ENCODE measurements at regions of chr1 and their contacts with region 1.

Region 1: DNA sequence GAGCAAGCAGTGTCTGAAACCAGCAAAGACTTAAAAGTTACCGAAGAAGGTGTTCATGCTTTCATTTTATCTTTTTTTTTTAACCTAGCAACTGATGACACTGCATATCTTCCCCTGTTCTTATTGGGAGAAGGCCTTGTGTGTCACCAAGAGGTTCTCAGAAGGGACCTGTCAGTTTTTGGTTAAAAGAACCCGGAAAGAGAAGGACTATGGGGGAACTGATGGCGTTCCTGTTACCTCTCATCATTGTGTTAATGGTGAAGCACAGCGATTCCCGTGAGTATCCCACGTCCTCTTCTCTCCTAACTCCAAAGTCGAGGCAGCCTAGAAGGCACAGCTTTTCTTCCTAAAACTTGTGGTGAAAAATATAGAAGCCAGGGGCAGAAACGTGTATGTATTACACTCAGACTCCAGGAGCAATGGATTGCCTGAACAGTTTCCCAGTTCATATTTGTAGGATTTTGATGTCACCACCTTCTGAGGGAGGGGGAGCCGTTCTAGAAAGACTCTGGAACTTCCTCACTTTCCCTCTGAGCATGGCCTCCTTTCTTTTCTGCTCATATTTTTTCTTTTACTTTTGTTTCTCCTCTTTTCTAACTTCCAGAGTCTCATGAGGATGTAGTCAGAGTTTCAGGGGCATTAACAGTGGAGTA is at the start of gene MR1:
- DNase-seq: no peak
- ATAC-seq: peak; percentile 95
- total RNA-seq, gene MR1: 10.5 to 12.0 TPM

Region 2: DNA sequence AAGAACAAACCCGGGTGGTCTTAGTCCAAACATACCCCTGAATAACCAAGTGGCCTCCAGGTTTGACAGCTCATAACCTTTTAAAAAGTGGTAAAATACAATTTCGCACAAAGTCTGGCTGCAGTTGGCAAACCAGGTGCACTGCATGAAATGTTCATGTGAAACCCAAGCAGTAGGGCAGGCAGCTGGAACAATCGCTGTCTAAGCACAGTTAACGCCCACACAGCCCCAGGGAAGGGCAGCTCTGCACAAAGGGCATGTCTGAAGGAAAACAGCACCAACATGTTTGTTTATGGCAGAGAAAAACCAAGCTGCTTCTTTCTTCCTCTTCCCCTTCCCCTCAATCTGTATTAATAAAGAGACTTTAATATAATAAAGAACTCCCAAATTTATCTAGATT is 71.7 kb before region 1 on chr1:
- intact Hi-C with region 1: no loop called
- DNase-seq: no peak
- ATAC-seq: peak in 1 of 2 donors; percentile 82

Region 3: GRCh38 chr1:181088079-181089016 is 54.4 kb after region 1 on chr1 and contains the start of gene IER5:
- intact Hi-C with region 1: loop called in 1 of 2 experiments (anchors 10 kb)
- DNase-seq: peak; percentile 95
- ATAC-seq: peak; percentile 91 to 96
- total RNA-seq, gene IER5: 15.7 to 25.0 TPM